ENCODE measurements at regions of chr15 and their contacts with region 1.

Region 1: DNA sequence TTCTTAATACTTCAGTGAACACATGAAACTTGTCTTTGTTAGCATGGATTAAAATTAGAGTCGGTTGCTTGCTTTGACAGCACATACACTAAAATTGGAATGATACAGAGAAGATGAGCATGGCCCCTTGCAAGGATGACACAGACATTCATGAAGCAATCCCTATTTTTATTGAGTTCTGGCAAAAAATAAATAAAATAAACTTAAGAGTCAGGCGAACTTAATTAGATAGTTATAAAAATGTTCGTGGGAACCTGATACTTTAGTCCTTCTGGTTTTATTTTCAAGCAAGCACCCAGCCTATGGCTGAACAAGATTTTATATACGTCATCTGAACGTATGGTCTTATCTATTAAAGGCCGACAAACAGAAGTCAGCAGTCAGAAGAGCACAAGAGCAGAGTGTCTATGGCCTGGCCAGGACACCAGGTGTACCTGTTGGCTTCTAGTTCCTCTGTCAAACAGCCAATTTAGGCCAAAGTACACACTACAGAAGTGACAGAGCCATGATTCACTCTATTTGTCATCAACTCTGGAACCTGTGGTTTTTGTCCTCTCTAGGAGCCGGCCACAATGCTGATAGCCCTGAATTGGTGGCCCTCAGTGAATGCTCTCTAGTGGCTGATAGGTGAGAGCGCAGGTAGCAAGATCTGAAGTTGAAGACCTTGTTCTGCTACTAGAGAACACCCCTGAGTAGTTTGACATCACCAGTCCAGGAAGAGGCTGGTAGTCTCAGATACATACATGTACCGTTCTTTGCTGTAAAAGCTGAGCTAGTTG is 64.3 kb downstream of the LEO1 start:
- DNase-seq: no peak
- H3K4me3 Mint-ChIP-seq: no peak overlapping the region
- H3K27ac Mint-ChIP-seq: no peak overlapping the region
- H3K4me1 Mint-ChIP-seq: no peaks in the 10 kb centered on the region
- H3K27me3 Mint-ChIP-seq: no peaks in the 10 kb centered on the region

Region 2: DNA sequence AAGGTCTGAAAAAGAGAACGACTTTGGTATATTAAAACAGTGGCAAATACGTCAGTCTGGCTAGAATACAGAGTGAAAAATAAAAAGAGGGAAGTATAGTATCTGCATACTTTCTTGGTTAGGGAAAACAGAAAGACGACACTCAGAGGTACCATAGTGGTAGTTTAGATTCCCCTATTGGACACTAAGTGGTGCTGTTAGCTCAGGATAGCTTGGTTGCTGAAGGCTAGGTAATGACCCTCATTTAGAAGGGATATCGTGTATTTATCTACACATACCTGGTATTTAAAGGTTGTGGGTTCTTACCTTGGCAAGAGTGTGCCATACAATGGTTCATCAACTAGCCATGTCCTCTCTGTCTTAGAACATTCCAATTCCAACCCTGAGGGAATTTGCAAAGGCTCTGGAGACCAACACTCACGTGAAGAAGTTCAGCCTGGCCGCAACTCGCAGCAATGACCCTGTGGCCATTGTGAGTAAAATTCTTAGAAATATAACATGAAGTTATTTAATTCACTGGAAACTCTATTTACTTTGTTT is 124.9 kb before region 1 on chr15:
- CTCF ChIA-PET with region 1: interaction called, 3 read pairs
- intact Hi-C with region 1: loop called (anchors 5 kb)
- DNase-seq: no peak
- H3K4me3 Mint-ChIP-seq: no peak overlapping the region
- H3K27ac Mint-ChIP-seq: no peak overlapping the region
- H3K4me1 Mint-ChIP-seq: no peaks in the 10 kb centered on the region
- H3K27me3 Mint-ChIP-seq: no peaks in the 10 kb centered on the region

Region 3: GRCh38 chr15:51888593-51889195 is 18.6 kb before region 1 on chr15:
- CTCF ChIA-PET with region 1: interaction called, 31 read pairs
- intact Hi-C with region 1: no loop called
- DNase-seq: no peak
- H3K4me3 Mint-ChIP-seq: no peak overlapping the region
- H3K27ac Mint-ChIP-seq: no peak overlapping the region
- H3K4me1 Mint-ChIP-seq: peaks cover 2% of the 10 kb centered on the region
- H3K27me3 Mint-ChIP-seq: no peaks in the 10 kb centered on the region

Measured in activated naive CD4-positive, alpha-beta T cell treated with anti-CD3 and anti-CD28 coated beads for 36 hours (primary cell).